H1 (cell line): ENCODE measurements at regions of chr16 and their contacts with region 1.

Region 1: GRCh38 chr16:12095275-12096156 is 119.0 kb downstream of the SNX29 start:
- DNase-seq: peak; percentile 17 to 81
- H3K4me3 ChIP-seq: no peak overlapping the region
- H3K27ac ChIP-seq: no peak overlapping the region
- H3K4me1 ChIP-seq: peaks cover 0 to 12% (median 4%) of the 10 kb centered on the region in 4 experiments; a peak in 6 of 7 replicates
- H3K27me3 ChIP-seq: peaks cover 0 to 8% (median 3%) of the 10 kb centered on the region in 4 experiments; a peak in 5 of 7 replicates
- CTCF ChIP-seq: peak; percentile 69 to 89 (median 69)
- EP300 ChIP-seq: no peak
- POLR2A ChIP-seq: no peak
- RAD21 ChIP-seq: peak; percentile 89 to 94

Region 2: GRCh38 chr16:12079412-12079965 is 16.0 kb before region 1 on chr16:
- CTCF ChIA-PET with region 1: interaction called, 10 read pairs
- POLR2A ChIA-PET with region 1: no interaction called
- DNase-seq: no peak
- H3K4me3 ChIP-seq: no peak overlapping the region
- H3K27ac ChIP-seq: no peak overlapping the region
- H3K4me1 ChIP-seq: no peaks in the 10 kb centered on the region
- H3K27me3 ChIP-seq: no peaks in the 10 kb centered on the region
- CTCF ChIP-seq: no peak
- EP300 ChIP-seq: no peak
- POLR2A ChIP-seq: no peak
- RAD21 ChIP-seq: no peak

Region 3: DNA sequence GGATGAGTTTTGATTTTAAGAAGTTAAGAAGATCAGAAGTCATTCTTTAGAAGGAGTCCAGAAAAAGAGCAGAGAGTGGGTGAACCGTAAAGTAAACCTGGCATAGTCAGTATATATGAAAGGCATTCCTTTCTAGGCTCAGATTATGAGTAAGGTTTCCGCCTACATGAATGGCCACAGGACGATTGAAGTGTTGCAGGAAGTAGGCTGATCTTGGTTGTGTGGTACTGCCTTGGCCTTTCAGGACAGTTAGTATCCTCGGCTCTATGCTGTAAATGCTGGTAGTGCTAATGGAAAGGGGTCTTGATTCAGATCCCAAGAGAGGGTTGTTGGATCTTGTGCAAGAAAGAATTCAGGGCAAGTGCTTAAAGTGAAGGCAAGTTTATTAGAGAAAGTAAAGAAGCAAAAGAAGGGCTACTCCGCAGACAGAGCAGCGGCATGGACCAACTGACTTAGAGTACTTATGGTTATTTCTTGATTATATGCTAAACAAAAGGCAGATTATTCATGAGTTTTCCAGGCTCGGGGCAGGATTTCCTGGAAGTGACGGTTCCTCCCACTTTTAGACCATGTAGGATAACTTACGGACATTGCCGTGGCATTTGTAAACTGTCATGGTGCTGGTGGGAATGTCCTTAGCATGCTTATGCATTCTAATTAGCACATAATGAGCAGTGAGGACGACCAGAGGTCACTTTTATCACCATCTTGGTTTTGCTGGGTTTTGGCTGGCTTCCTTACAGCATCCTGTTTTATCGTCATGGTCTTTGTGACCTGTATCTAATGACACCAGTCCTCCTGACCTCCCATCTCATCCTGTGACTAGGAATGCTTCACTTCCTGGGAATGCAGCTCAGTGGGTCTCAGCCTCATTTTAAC is 45.8 kb after region 1 on chr16:
- CTCF ChIA-PET with region 1: interaction called, 13 read pairs
- POLR2A ChIA-PET with region 1: interaction called, 3 read pairs
- DNase-seq: no peak
- H3K4me3 ChIP-seq: no peak overlapping the region
- H3K27ac ChIP-seq: no peak overlapping the region
- H3K4me1 ChIP-seq: peaks cover 0 to 4% (median 0%) of the 10 kb centered on the region in 4 experiments; a peak in 2 of 7 replicates
- H3K27me3 ChIP-seq: no peaks in the 10 kb centered on the region
- CTCF ChIP-seq: no peak
- EP300 ChIP-seq: no peak
- POLR2A ChIP-seq: no peak
- RAD21 ChIP-seq: no peak

Region 4: DNA sequence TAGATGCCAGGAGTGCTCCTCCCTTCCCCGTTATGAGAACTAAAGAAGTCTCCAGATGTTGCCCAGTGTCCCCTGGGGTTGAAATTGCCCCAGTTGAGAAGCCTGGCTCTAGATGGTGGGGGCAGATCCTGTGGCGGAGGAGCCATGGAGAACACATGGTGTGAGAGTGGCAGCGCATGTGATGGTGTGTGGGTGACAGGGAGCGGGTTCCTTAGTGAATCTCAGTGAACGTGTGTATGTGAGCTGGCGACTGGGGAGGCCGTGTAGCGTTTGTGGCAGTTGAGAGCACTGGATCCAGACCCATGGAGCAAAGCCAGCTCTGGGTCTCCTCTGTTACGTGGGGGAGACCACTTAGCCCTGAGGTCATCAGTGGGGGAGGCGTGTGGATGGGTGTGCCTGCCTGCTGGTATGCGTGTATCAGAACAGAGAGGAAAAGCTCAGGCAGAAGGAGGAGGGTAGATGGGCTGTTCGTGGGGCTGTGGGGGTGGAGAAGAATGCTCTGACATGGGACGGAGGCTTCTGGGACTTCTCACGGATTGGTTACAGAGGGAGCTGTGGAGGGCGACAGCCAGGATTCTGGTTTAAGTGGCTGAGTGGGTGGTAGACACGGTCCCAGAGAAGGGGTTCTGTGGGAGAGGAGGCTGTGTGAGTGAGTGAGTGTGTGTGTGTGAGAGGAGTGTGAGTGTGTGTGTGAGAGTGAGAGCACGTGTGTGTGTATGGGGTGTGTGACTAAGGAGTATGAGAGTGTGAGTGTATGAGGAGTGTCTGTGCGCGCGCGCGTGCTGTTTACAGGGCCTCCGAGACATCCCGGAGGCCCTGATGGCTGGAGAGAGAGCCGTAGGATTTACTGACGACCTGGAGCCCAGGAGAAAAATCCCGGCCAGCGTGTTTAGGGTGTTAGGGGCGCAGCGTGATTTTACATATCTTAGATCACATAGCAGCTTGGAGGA is 74.8 kb after region 1 on chr16:
- CTCF ChIA-PET with region 1: interaction called, 41 read pairs
- POLR2A ChIA-PET with region 1: no interaction called
- DNase-seq: no peak
- H3K4me3 ChIP-seq: no peak overlapping the region
- H3K27ac ChIP-seq: no peak overlapping the region; the same call in 1 of the 2 replicates
- H3K4me1 ChIP-seq: no peaks in the 10 kb centered on the region
- H3K27me3 ChIP-seq: no peaks in the 10 kb centered on the region
- CTCF ChIP-seq: no peak
- EP300 ChIP-seq: no peak
- POLR2A ChIP-seq: no peak
- RAD21 ChIP-seq: no peak

Region 5: GRCh38 chr16:12207939-12208685 is 112.6 kb after region 1 on chr16:
- CTCF ChIA-PET with region 1: interaction called, 71 read pairs
- POLR2A ChIA-PET with region 1: no interaction called
- DNase-seq: no peak
- H3K4me3 ChIP-seq: no peak overlapping the region
- H3K27ac ChIP-seq: no peak overlapping the region
- H3K4me1 ChIP-seq: no peaks in the 10 kb centered on the region; a peak in 1 of 7 replicates
- H3K27me3 ChIP-seq: no peaks in the 10 kb centered on the region
- CTCF ChIP-seq: no peak
- EP300 ChIP-seq: no peak
- POLR2A ChIP-seq: no peak
- RAD21 ChIP-seq: no peak

Region 6: DNA sequence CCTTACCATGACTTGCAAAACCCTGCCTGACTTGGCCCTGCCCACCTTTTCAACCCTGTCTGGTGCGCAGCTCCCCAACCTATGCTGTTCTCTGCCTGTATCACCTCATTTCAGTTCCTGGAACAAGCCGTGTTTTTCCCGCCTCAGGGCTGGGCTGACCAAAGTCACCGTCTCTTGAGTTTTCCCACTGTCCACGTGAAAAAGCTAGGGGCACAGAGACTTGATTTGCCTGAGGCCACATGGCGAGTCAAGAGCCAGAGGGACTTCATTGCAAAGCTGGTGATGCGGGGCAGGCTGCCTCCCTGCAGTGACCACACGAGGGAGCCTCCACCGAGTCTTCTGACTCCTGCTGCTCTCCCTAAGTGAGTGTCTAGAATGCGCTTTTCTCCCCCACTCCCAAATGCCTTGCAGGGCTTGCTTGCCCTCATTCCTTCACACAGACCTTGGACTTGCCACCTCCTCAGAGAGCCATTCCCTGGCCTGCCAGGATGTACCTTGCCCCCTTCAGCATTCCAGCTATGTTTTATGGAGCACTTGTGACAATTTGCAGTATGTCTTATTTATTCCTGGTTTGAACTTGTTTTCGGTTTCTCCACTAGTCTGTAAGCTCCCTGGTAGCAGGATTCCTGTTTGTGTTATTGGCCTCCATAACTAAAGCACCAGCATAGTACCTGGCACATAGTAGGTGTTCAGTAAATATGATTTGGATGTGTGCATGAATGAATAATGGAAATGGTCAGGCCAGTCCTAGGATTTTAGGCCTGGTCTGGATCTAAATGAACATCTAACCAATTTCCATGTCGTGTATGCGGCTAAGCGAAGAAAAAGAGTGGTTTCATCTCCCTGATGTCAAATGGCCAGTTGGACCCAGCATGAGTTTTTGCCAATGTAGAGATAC is 133.3 kb after region 1 on chr16:
- CTCF ChIA-PET with region 1: interaction called, 20 read pairs
- POLR2A ChIA-PET with region 1: no interaction called
- DNase-seq: peak; percentile 53 to 80
- H3K4me3 ChIP-seq: no peak overlapping the region
- H3K27ac ChIP-seq: no peak overlapping the region
- H3K4me1 ChIP-seq: peaks cover 0 to 9% (median 5%) of the 10 kb centered on the region in 4 experiments; a peak in 3 of 7 replicates
- H3K27me3 ChIP-seq: no peaks in the 10 kb centered on the region
- CTCF ChIP-seq: peak; percentile 78 to 95 (median 87)
- EP300 ChIP-seq: no peak
- POLR2A ChIP-seq: no peak
- RAD21 ChIP-seq: peak; percentile 68 to 71

Region 7: DNA sequence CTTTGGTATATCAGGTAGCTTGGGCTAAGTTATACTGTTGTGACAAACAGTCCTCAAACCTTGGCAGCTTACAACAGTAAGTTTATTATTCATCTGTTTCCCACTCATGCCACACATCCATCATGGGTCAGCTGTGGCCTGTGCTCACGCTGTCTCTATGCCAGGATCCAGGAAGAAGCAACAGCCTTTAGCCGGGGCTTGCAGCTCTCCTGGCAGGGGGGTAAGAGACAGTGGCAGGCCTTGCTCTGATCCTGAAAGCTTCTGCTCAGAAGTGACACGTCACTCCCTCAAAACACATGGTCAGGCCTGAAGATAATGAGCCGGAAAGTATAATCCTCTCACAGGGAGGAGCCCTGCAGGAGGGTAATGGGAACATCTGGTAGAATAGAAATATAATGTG is 330.6 kb after region 1 on chr16:
- CTCF ChIA-PET with region 1: no interaction called
- POLR2A ChIA-PET with region 1: no interaction called
- DNase-seq: no peak
- H3K4me3 ChIP-seq: no peak overlapping the region
- H3K27ac ChIP-seq: no peak overlapping the region
- H3K4me1 ChIP-seq: peaks cover 0 to 4% (median 2%) of the 10 kb centered on the region in 4 experiments; a peak in 2 of 7 replicates
- H3K27me3 ChIP-seq: no peaks in the 10 kb centered on the region
- CTCF ChIP-seq: no peak
- EP300 ChIP-seq: no peak
- POLR2A ChIP-seq: no peak
- RAD21 ChIP-seq: no peak